Dorsolateral prefrontal cortex (tissue), 120 donors: ENCODE measurements at regions of chr5 and their contacts with region 1.

Region 1: DNA sequence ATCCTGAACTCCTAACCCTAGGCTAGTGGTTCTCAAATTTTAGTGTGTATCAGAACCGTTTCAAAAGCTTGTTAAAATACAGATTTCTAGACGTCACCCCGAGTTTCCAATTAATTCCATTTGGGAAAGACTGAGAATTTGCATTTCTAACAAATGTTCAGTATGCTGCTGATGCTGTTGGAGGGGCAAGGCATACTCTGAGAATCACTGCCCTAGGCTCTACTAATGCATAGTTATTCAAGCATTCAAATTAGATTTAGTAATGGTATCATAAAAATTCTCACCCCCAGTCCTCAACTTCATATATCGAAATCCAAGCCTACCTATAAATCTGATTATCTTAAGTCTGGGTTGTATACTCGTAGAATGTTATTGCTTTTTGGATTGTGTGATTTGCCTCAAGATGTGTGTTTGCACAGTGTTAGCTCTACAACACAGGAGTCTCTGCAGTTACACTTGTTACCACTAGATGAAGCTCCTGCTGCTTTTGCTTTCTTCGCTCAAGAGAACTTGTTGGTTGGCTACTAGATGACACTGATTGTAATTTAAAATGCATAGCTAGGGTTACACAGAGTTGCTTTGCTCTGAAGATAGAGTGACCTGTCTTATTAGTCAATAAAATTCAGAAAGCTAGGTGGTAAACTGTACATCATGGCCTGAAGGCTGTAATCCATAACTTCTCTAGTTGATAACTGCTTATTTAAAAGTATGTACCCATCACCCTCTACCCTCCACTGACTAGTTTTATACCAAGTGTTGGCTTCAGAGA is 7.5 kb upstream of the ERAP2 start:
- DNase-seq: peak in 1 of 10 donors; percentile 17
- H3K4me3 ChIP-seq: peak overlapping the region in 1 of 59 donors; percentile 9
- H3K27ac ChIP-seq: no peak overlapping the region
- H3K27me3 ChIP-seq: no peaks in the 10 kb centered on the region
- CTCF ChIP-seq: peak; percentile 50 to 95 (median 87)

Region 2: GRCh38 chr5:96752341-96753016 is 116.3 kb before region 1 on chr5:
- intact Hi-C with region 1: loop called (anchors 5 to 10 kb)
- DNase-seq: peak in 1 of 10 donors; percentile 39
- H3K4me3 ChIP-seq: no peak overlapping the region
- H3K27ac ChIP-seq: peak overlapping the region in 30 of 59 donors; percentile 9 to 72 (median 46)
- H3K27me3 ChIP-seq: no peaks in the 10 kb centered on the region
- CTCF ChIP-seq: peak; percentile 61 to 93 (median 78)

Region 3: DNA sequence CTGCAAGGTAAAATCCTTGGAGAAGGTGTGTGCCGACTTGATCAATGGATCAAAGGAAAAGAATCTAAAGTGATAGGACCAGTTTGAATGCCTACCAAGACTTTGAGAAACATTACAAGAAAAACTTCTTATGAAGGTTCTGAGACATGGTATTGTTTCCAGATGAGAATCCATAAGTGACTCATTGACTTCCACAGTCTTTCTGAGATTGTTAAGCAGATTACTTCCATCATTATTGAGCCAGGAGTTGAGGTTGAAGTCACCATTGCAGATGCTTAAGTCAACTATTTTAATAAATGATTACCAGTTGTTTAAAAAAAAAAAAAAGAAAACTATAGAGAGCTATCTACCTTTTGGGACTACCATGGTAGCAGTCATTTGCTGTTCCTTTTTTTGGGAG is 74.1 kb after region 1 on chr5:
- intact Hi-C with region 1: no loop called
- DNase-seq: no peak
- H3K4me3 ChIP-seq: no peak overlapping the region
- H3K27ac ChIP-seq: no peak overlapping the region
- H3K27me3 ChIP-seq: no peaks in the 10 kb centered on the region
- CTCF ChIP-seq: no peak

Region 4: DNA sequence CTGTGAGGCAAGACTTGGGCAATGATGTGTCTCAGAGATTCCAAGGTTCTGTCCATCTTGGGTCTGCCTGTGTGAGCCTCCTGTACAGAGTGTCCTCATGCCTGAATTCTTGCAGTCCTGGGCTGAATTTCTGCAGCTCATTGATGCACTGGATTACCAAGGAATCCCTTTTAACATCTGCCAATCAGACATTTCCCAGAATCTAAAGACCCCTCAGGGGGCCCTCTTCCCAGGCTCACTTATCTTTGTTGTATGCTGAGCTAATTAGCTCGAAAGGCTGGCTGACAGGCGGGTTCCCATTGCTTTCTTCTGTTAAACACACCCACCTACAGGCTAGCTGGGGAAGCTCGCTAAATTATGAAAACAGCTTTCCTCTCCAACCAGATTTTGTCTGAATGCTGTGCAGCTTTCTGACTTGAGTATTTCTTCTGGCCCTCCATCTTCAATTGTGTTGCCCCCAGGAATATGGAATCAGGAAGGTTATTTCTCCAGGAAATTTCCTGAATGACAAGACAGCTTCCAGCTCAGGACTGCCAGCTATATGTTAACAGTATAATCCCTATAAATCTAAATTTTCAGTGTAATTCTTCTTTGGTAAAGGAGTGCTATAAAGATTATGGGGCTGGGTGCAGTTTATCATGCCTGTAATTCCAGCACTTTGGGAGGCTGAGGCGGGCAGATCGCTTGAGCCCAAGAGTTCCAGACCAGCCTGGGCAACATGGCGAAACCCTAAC is 273.9 kb after region 1 on chr5 and contains the start of gene LIX1:
- intact Hi-C with region 1: loop called (anchors 2 to 5 kb)
- DNase-seq: peak; percentile 11 to 80 (median 58)
- H3K4me3 ChIP-seq: peak within 1 kb of the TSS in 56 of 59 donors; percentile 1 to 62 (median 38)
- H3K27ac ChIP-seq: peak within 1 kb of the TSS in 17 of 59 donors; percentile 7 to 52 (median 25)
- H3K27me3 ChIP-seq: peaks cover 0 to 3% (median 0%) of the 10 kb centered on the region in 45 donors
- CTCF ChIP-seq: peak in 55 of 56 donors; percentile 34 to 85 (median 67)
- total RNA-seq, gene LIX1: 4.5 to 44.2 (median 17.9) TPM